Astrocyte of the spinal cord (primary cell): ENCODE measurements at regions of chr3 and their contacts with region 1.

Region 1: DNA sequence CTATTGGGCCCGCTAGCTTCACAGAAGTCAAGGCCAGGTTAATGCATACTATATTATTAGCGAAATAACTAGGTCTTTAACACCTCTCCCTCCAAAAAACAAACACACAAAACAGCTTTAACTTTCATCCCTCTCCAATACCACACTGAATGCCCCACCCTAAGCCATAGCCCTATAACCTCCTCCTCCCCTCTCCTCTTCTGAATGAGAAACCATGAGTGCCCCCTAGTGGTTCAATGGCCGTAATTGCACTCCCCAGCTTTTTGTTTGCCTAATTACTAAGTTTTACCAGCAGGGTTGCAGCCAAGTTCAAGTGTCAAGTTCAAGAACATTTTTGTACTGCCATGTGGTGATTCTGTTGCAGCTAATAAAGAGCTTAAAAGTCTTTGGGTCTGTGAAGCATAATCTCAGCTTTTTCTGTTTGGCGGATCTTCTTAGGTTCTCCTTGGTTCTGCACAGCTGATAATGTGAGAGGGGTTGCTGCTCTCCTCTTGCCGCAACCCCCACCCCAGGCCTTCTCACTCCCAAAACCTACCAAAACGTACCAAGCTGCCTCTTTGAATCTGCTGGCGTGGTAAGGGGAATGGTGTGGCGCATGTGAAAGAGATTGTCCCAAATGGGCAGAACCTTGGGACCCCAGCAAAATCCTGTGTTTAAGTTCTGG is 57.9 kb downstream of the RPL22L1 start:
- DNase-seq: peak; percentile 88
- H3K4me3 ChIP-seq: no peak overlapping the region
- CTCF ChIP-seq: peak; percentile 89

Region 2: GRCh38 chr3:170258105-170258487 is 554.0 kb before region 1 on chr3:
- in situ Hi-C with region 1: no loop called
- DNase-seq: no peak
- H3K4me3 ChIP-seq: no peak overlapping the region
- CTCF ChIP-seq: no peak

Region 3: GRCh38 chr3:170419557-170420087 is 392.4 kb before region 1 on chr3:
- in situ Hi-C with region 1: loop called (anchors 10 kb)
- DNase-seq: peak; percentile 51
- H3K4me3 ChIP-seq: peak overlapping the region; percentile 87
- CTCF ChIP-seq: no peak